Activated CD8-positive, alpha-beta T cell treated with anti-CD3 and anti-CD28 coated beads, Interleukin-2, amount 10 ng/mL, durations not matched to agents 7 days and 5 days (primary cell): ENCODE measurements at regions of chr12 and their contacts with region 1.

Region 1: DNA sequence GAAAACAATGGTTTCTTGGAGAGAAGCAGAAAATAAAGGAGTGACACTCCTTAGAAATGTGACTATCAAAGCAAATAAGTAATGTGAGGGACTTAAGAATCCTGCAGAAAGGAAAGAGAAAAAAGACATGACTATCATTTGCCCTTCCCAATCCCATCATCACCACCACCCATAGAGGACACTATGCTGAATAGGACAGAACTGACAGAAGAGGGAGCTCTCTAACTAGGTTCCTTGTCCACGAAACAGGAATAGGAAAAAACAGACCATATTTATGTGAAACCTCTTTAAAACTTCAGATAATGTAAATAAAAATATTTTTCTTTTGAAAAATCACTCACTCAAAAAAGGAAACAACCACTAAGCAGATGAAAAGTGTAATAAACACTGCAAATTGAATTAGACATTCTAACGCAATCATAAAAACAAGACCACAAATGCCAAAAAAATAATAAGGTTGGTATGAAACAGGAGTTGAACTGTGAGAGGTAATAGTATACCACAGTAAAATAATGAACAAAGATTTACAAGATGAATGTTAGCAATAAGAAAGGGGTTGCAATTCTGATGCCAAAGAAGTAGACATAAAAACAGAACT is 24.1 kb downstream of the KLRD1 start:
- DNase-seq: no peak
- ATAC-seq: peak; percentile 69
- H3K4me3 Mint-ChIP-seq: no peak overlapping the region
- H3K27ac Mint-ChIP-seq: no peak overlapping the region
- H3K4me1 Mint-ChIP-seq: peaks cover 14% of the 10 kb centered on the region
- H3K27me3 Mint-ChIP-seq: no peaks in the 10 kb centered on the region

Region 2: DNA sequence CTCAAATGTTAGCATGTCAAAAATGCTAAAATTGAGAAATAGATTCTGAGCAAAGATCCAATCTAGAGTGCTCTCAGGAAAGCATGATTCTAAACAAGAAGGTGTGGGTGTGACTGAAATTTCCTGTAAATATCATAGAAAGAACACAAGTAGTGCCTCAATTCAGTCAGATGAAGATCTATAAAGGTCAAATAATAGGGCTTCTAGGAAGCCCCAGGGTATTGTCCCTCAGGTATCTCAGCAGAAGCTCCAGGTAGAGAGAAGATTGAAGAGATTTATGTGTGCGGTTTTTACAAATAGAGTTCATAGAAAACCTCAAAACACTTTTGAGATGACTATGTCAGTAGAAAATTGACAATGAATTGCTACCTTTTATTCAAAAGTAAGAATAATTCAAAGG is 11.1 kb before region 1 on chr12:
- CTCF ChIA-PET with region 1: interaction called, 16 read pairs
- POLR2A ChIA-PET with region 1: no interaction called
- DNase-seq: no peak
- ATAC-seq: peak; percentile 76
- H3K4me3 Mint-ChIP-seq: no peak overlapping the region
- H3K27ac Mint-ChIP-seq: no peak overlapping the region
- H3K4me1 Mint-ChIP-seq: peaks cover 28% of the 10 kb centered on the region
- H3K27me3 Mint-ChIP-seq: no peaks in the 10 kb centered on the region

Region 3: GRCh38 chr12:10354502-10354901 is 22.8 kb after region 1 on chr12:
- CTCF ChIA-PET with region 1: no interaction called
- POLR2A ChIA-PET with region 1: no interaction called
- DNase-seq: no peak
- ATAC-seq: no peak
- H3K4me3 Mint-ChIP-seq: no peak overlapping the region
- H3K27ac Mint-ChIP-seq: no peak overlapping the region
- H3K4me1 Mint-ChIP-seq: peaks cover 20% of the 10 kb centered on the region
- H3K27me3 Mint-ChIP-seq: no peaks in the 10 kb centered on the region